ENCODE measurements at regions of chr13 and their contacts with region 1.

Region 1: GRCh38 chr13:26186118-26186870 is 35.8 kb downstream of the RNF6 start:
- DNase-seq: peak; percentile 83 to 97 (median 88)
- ATAC-seq: peak; percentile 83
- H3K4me3 ChIP-seq: peak overlapping the region; percentile 88
- H3K4me3 Mint-ChIP-seq: peak overlapping the region; percentile 87
- H3K27ac ChIP-seq: peak overlapping the region; percentile 55 to 60
- H3K27ac Mint-ChIP-seq: peak overlapping the region; percentile 92
- H3K4me1 ChIP-seq: peaks cover 26% of the 10 kb centered on the region
- H3K4me1 Mint-ChIP-seq: peaks cover 23% of the 10 kb centered on the region
- H3K27me3 ChIP-seq: no peaks in the 10 kb centered on the region
- H3K27me3 Mint-ChIP-seq: no peaks in the 10 kb centered on the region
- CTCF ChIP-seq: peak; percentile 40

Region 2: DNA sequence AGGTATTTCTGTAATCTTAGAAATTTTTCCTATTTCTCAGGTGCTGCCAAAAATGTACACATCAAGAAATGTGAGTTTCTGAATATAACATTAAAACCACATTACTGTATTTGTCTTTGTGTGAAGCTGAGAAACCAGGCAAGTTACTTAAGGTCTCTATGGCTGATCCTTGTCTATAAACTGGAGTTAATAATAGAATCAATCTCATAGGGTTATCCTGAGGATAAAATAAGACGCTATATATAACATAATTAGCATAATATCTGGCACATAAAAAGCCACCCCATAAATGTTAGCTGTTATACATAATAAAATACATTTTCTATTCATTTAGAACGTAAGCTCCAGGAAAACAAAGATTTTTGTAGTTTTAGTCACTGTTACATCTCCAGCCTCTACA is 29.7 kb after region 1 on chr13:
- CTCF ChIA-PET with region 1: interaction called, 51 read pairs
- POLR2A ChIA-PET with region 1: interaction called, 52 read pairs
- intact Hi-C with region 1: loop called in 1 of 2 experiments (anchors 1 kb)
- DNase-seq: no peak
- ATAC-seq: no peak
- H3K4me3 ChIP-seq: no peak overlapping the region
- H3K4me3 Mint-ChIP-seq: no peak overlapping the region
- H3K27ac ChIP-seq: no peak overlapping the region
- H3K27ac Mint-ChIP-seq: no peak overlapping the region
- H3K4me1 ChIP-seq: peaks cover 7% of the 10 kb centered on the region
- H3K4me1 Mint-ChIP-seq: peaks cover 45% of the 10 kb centered on the region
- H3K27me3 ChIP-seq: no peaks in the 10 kb centered on the region
- H3K27me3 Mint-ChIP-seq: no peaks in the 10 kb centered on the region
- CTCF ChIP-seq: no peak

Region 3: GRCh38 chr13:26253787-26254582 is 67.7 kb after region 1 on chr13 and contains the start of gene CDK8:
- CTCF ChIA-PET with region 1: interaction called, 12 read pairs
- POLR2A ChIA-PET with region 1: interaction called, 5 read pairs
- intact Hi-C with region 1: loop called (anchors 1 kb)
- DNase-seq: peak; percentile 76 to 94 (median 86)
- ATAC-seq: peak; percentile 84
- H3K4me3 ChIP-seq: peak within 1 kb of the TSS; percentile 73
- H3K4me3 Mint-ChIP-seq: peak within 1 kb of the TSS; percentile 94
- H3K27ac ChIP-seq: peak within 1 kb of the TSS; percentile 78 to 84
- H3K27ac Mint-ChIP-seq: peak within 1 kb of the TSS; percentile 84
- H3K4me1 ChIP-seq: peaks cover 12% of the 10 kb centered on the region
- H3K4me1 Mint-ChIP-seq: peaks cover 42% of the 10 kb centered on the region
- H3K27me3 ChIP-seq: no peaks in the 10 kb centered on the region
- H3K27me3 Mint-ChIP-seq: no peaks in the 10 kb centered on the region
- CTCF ChIP-seq: no peak
- total RNA-seq, gene CDK8: 6.0 to 6.7 TPM

Region 4: DNA sequence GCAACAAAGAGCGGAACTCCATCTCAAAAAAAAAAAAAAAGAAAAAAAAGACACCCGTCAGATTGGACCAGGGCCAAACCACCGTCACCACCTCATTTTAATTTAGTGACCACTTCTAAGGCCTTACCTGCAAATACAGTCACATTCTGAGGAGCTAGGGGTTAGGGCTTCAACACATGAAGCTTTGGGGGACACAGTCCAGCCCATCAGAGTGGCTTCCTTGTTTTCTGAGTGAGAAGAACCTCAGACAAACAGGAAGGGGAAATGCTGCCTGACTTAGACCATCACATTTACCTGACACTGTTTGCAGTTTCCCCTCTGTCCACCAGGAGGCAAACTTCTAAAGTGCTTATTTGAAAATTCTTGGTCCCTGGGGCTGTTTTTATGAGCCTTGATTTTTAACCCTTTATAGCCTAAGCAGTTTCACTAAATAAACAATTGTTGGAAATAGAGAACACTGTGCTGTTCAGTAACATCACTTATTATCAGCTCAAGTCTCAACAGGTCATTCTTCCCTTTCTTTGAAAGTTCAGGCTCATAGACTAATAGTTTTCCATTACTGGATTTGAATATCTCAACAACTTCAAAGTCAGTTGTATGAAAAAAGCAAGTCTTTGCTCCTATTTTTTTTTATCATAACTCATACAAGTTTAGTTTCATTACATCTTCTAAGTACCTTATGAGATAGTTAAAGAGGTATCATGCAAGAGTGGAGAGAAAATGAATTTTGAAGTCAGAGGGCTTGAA is 296.3 kb after region 1 on chr13:
- CTCF ChIA-PET with region 1: interaction called, 6 read pairs
- POLR2A ChIA-PET with region 1: interaction called, 5 read pairs
- intact Hi-C with region 1: loop called in 1 of 2 experiments (anchors 5 kb)
- DNase-seq: peak; percentile 37 to 87 (median 54)
- ATAC-seq: peak; percentile 97
- H3K4me3 ChIP-seq: no peak overlapping the region
- H3K4me3 Mint-ChIP-seq: peak overlapping the region; percentile 16
- H3K27ac ChIP-seq: peak overlapping the region in 1 of 2 donors; percentile 60
- H3K27ac Mint-ChIP-seq: peak overlapping the region; percentile 79
- H3K4me1 ChIP-seq: peaks cover 23% of the 10 kb centered on the region
- H3K4me1 Mint-ChIP-seq: peaks cover 27% of the 10 kb centered on the region
- H3K27me3 ChIP-seq: no peaks in the 10 kb centered on the region
- H3K27me3 Mint-ChIP-seq: no peaks in the 10 kb centered on the region
- CTCF ChIP-seq: peak; percentile 85

Region 5: GRCh38 chr13:26698392-26699196 is 512.3 kb after region 1 on chr13:
- CTCF ChIA-PET with region 1: interaction called, 48 read pairs
- POLR2A ChIA-PET with region 1: interaction called, 12 read pairs
- intact Hi-C with region 1: loop called (anchors 1 kb)
- DNase-seq: peak; percentile 53 to 88 (median 76)
- ATAC-seq: peak; percentile 91
- H3K4me3 ChIP-seq: no peak overlapping the region
- H3K4me3 Mint-ChIP-seq: no peak overlapping the region
- H3K27ac ChIP-seq: no peak overlapping the region
- H3K27ac Mint-ChIP-seq: no peak overlapping the region
- H3K4me1 ChIP-seq: peaks cover 5% of the 10 kb centered on the region
- H3K4me1 Mint-ChIP-seq: no peaks in the 10 kb centered on the region
- H3K27me3 ChIP-seq: no peaks in the 10 kb centered on the region
- H3K27me3 Mint-ChIP-seq: peaks cover 13% of the 10 kb centered on the region
- CTCF ChIP-seq: peak; percentile 91

Region 6: DNA sequence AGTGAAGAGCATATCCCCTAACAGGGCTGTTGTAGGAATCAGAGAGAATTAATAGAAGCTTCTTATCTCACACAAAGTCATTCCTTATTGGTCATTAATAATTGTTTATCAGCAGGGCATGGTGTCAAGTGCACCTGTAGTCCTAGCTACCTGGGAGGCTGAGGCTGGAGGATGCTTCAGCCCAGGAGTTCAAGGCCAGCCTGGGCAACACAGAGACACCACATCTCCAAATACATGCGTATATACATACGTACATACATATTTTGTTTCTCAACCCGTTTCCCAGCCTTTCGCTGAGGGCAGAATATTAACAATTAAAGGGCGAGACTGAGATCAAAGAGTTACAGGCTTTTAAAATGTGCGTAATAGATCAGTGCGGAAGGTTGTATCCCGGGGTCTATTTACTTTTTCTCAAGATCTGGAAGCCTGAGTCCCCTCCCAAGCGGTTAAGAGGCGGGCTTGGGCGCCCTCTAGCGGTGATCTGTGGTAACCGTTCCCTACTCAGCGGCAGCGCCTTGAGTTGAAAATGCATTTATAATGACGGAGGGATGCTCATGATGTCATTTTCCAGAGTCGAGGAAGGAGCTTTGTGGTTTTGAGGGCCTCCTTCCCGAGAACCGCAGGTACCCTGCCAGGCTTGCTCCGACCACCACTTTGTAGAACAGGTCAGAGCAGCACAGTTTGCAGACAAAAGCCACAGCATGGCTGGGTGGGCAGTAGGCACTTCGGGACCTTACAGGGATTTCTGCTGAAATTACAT is 743.9 kb after region 1 on chr13:
- CTCF ChIA-PET with region 1: no interaction called
- POLR2A ChIA-PET with region 1: no interaction called
- intact Hi-C with region 1: loop called (anchors 1 to 5 kb)
- DNase-seq: peak; percentile 38 to 78 (median 62)
- ATAC-seq: peak; percentile 59
- H3K4me3 ChIP-seq: no peak overlapping the region
- H3K4me3 Mint-ChIP-seq: no peak overlapping the region
- H3K27ac ChIP-seq: no peak overlapping the region
- H3K27ac Mint-ChIP-seq: no peak overlapping the region
- H3K4me1 ChIP-seq: peaks cover 5% of the 10 kb centered on the region
- H3K4me1 Mint-ChIP-seq: no peaks in the 10 kb centered on the region
- H3K27me3 ChIP-seq: peaks cover 2 to 4% of the 10 kb centered on the region in 2 experiments
- H3K27me3 Mint-ChIP-seq: peaks cover 11% of the 10 kb centered on the region
- CTCF ChIP-seq: peak; percentile 96

Measured in CD4-positive, alpha-beta T cell (primary cell).